A673 (cell line): ENCODE measurements at regions of chr9 and their contacts with region 1.

Region 1: GRCh38 chr9:125407974-125408900 is 146.6 kb downstream of the GAPVD1 start:
- DNase-seq: peak; percentile 86
- H3K4me3 ChIP-seq: peak overlapping the region; percentile 63
- H3K27ac ChIP-seq: peak overlapping the region; percentile 50
- H3K4me1 ChIP-seq: no peaks in the 10 kb centered on the region
- H3K27me3 ChIP-seq: no peaks in the 10 kb centered on the region
- CTCF ChIP-seq: peak; percentile 93

Region 2: GRCh38 chr9:125631391-125632085 is 223.3 kb after region 1 on chr9:
- CTCF ChIA-PET with region 1: interaction called, 3 read pairs
- POLR2A ChIA-PET with region 1: no interaction called
- intact Hi-C with region 1: loop called (anchors 5 kb)
- DNase-seq: peak; percentile 58
- H3K4me3 ChIP-seq: no peak overlapping the region
- H3K27ac ChIP-seq: no peak overlapping the region
- H3K4me1 ChIP-seq: peaks cover 14% of the 10 kb centered on the region
- H3K27me3 ChIP-seq: no peaks in the 10 kb centered on the region
- CTCF ChIP-seq: peak; percentile 73

Region 3: GRCh38 chr9:126228781-126229444 is 820.7 kb after region 1 on chr9:
- CTCF ChIA-PET with region 1: interaction called, 3 read pairs
- POLR2A ChIA-PET with region 1: no interaction called
- intact Hi-C with region 1: loop called (anchors 2 kb)
- DNase-seq: peak; percentile 76
- H3K4me3 ChIP-seq: no peak overlapping the region
- H3K27ac ChIP-seq: no peak overlapping the region
- H3K4me1 ChIP-seq: no peaks in the 10 kb centered on the region
- H3K27me3 ChIP-seq: peaks cover 63% of the 10 kb centered on the region
- CTCF ChIP-seq: peak; percentile 96